ENCODE measurements at regions of chr12 and their contacts with region 1.

Region 1: DNA sequence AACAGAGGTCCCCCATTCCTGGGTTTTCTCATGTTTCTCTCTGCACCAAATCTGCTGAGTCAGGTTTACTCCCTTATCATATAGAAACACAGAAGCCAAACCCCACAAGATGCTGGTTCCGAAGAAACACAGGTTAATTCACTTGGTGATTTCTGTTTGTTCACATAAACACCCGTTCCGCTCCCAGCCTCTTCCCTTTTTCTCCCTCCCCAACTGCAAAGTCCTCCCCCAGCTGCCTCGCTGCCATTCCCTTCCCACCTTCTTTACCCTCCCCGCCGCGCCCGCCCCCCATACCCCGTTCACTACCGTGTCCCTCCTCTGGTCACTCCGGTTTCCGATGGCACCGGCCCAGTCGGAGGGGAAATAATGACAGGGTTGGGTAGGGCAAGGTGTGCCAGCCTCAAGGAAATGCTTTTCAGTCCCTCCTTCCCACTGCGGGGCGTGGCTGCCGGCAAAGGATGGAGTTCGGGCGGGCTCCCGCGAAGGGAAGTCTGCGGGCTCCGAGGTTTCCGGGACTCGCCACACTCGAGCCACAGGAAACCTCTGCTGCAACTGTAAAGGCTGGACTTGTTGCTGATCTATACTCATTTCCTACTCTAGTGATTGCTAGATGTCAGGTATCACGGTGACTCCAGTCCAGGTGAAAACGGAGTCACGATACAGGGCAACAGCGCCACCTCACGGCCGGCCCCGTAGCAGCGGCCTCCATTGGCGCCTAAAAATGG is at the start of gene STYK1:
- DNase-seq: peak; percentile 75
- H3K4me3 ChIP-seq: peak within 1 kb of the TSS; percentile 49 to 82 (median 69)
- H3K27ac ChIP-seq: peak within 1 kb of the TSS; percentile 49
- H3K4me1 ChIP-seq: peaks cover 22% of the 10 kb centered on the region
- H3K27me3 ChIP-seq: no peaks in the 10 kb centered on the region
- CTCF ChIP-seq: peak; percentile 92 to 95
- POLR2A ChIP-seq: no peak
- total RNA-seq, gene STYK1: 14.6 and 15.2 TPM in 2 replicates

Region 2: DNA sequence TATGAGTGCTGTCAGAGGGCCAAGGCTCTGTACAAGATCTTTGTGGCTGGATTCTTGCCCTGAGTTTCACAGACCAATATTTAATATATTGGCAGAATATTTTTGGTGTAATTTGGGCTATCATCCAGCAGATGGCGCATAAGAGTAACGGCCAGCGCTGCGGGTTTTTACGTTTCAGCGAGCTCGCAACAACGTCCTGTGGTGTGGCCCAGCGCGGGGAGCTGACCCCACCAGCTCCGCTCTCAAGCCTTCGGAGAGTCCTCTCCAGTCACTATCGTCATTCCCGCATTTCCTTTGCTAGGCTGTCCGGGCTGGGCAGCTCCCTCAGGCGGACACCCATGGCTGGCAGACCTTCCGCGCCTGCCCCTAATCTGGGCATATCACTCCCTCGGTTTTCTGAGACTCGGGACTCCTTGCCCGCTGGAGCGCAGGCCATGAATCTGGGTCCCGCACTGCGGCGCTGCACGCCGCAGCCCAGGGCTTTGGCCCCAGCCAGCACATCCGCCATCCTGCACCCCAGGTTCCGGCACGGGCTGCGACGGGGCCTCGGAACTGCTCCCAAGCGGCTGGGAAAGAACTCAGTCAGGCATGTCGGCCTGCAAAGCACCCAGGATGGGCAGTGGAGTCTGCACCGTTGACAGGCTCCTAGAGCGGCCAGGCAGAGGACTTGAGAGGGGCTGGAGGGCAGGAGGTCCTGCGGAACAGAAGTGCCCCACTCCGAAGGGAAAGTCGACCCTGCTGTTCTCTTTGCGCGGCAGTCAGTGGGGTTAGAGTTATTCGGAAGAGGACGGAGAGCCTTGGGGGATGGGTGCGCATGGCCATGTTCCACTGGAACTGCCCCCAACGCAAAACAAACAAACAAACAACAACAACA is 520.3 kb before region 1 on chr12:
- CTCF ChIA-PET with region 1: interaction called, 6 read pairs
- POLR2A ChIA-PET with region 1: no interaction called
- dilution Hi-C with region 1: no loop called
- intact Hi-C with region 1: loop called (anchors 2 kb)
- DNase-seq: peak; percentile 81
- H3K4me3 ChIP-seq: peak overlapping the region; percentile 44 to 67 (median 48)
- H3K27ac ChIP-seq: peak overlapping the region; percentile 58
- H3K4me1 ChIP-seq: peaks cover 5% of the 10 kb centered on the region
- H3K27me3 ChIP-seq: peaks cover 0 to 2% of the 10 kb centered on the region in 2 experiments
- CTCF ChIP-seq: peak; percentile 70 to 72
- POLR2A ChIP-seq: no peak

Region 3: GRCh38 chr12:10235761-10236631 is 437.8 kb before region 1 on chr12:
- CTCF ChIA-PET with region 1: interaction called, 3 read pairs
- POLR2A ChIA-PET with region 1: no interaction called
- dilution Hi-C with region 1: no loop called
- intact Hi-C with region 1: loop called (anchors 1 kb)
- DNase-seq: peak; percentile 55
- H3K4me3 ChIP-seq: no peak overlapping the region
- H3K27ac ChIP-seq: no peak overlapping the region
- H3K4me1 ChIP-seq: no peaks in the 10 kb centered on the region
- H3K27me3 ChIP-seq: no peaks in the 10 kb centered on the region
- CTCF ChIP-seq: peak; percentile 72 to 73
- POLR2A ChIP-seq: no peak

Region 4: GRCh38 chr12:10528174-10528953 is 145.5 kb before region 1 on chr12:
- CTCF ChIA-PET with region 1: no interaction called
- POLR2A ChIA-PET with region 1: no interaction called
- dilution Hi-C with region 1: no loop called
- intact Hi-C with region 1: no loop called
- DNase-seq: no peak
- H3K4me3 ChIP-seq: no peak overlapping the region
- H3K27ac ChIP-seq: no peak overlapping the region
- H3K4me1 ChIP-seq: no peaks in the 10 kb centered on the region
- H3K27me3 ChIP-seq: no peaks in the 10 kb centered on the region
- CTCF ChIP-seq: no peak
- POLR2A ChIP-seq: no peak

Region 5: GRCh38 chr12:10562306-10562933 is 111.4 kb before region 1 on chr12:
- CTCF ChIA-PET with region 1: interaction called, 3 read pairs
- POLR2A ChIA-PET with region 1: no interaction called
- dilution Hi-C with region 1: no loop called
- intact Hi-C with region 1: loop called (anchors 1 kb)
- DNase-seq: peak; percentile 72
- H3K4me3 ChIP-seq: no peak overlapping the region
- H3K27ac ChIP-seq: no peak overlapping the region
- H3K4me1 ChIP-seq: no peaks in the 10 kb centered on the region
- H3K27me3 ChIP-seq: no peaks in the 10 kb centered on the region
- CTCF ChIP-seq: peak; percentile 34 to 41
- POLR2A ChIP-seq: no peak

Region 6: DNA sequence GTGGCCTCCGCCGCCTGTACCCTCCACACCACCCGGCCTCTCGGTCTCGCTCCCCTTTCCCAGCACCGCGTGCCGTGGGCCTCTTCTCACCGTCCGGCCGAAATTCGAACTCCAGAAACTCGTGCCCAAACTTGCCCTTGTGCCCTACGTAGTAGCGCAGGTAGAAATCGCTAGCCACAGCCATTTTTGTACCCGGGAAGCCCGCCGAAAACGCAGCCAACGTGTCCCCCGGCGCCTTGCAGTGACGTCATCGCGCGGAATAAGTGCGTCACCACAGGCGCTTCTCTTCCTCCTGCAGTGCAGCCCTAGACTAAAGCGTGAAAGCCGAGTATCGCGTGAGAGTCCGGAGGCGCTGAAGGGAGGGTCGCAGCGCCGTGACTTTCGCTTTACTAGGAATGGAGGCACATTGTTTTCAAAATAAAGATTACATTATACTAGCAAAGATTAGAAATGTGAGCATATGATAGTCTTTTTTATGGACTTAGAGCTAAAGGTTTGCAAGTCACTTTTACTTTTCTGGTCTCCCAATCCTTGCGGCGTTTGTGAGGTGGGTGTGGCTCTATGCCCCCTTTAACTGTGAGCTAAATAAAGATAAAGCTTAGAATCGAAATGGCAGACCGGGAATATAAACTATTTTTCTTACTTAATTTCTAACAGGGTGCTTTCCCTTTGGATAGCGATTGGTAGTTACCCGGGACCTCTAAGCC is 60.3 kb before region 1 on chr12 and contains the start of gene MAGOHB:
- CTCF ChIA-PET with region 1: interaction called, 4 read pairs
- POLR2A ChIA-PET with region 1: interaction called, 3 read pairs
- dilution Hi-C with region 1: no loop called
- intact Hi-C with region 1: loop called (anchors 1 kb)
- DNase-seq: peak; percentile 95
- H3K4me3 ChIP-seq: peak within 1 kb of the TSS; percentile 58 to 96 (median 93)
- H3K27ac ChIP-seq: peak within 1 kb of the TSS; percentile 90
- H3K4me1 ChIP-seq: peaks cover 18% of the 10 kb centered on the region
- H3K27me3 ChIP-seq: no peaks in the 10 kb centered on the region
- CTCF ChIP-seq: no peak
- POLR2A ChIP-seq: peak; percentile 70
- total RNA-seq, gene MAGOHB: 45.4 and 48.3 TPM in 2 replicates

Region 7: DNA sequence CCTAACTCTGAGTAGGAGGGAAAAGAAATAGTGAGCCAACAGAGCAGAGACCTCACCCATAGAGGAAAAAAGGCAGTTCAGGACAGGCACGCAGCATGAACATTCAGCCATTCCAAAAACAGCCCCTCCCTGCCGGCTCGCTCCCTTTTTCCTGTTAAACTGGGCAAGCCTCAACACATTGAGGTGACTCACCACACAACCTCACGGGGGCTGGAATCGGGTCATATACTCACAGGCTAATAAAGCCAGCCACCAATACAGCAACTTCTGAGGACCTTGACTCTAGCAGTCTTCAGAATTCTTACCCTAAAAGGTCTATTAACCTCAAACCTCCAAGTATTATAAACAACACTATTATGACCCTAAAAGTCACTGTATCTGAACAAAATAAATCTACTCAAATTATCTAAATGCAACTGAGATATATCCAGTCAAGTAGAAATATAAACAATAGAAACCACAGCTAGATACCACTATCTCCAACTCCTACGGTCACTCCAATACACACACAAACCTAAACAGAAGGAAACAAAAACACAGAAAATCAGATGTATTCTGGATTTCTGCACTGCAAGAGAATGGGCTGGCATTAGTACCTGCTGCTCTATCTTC is 43.0 kb after region 1 on chr12:
- CTCF ChIA-PET with region 1: no interaction called
- POLR2A ChIA-PET with region 1: no interaction called
- dilution Hi-C with region 1: no loop called
- intact Hi-C with region 1: loop called (anchors 2 kb)
- DNase-seq: peak; percentile 95
- H3K4me3 ChIP-seq: peak overlapping the region in 2 of 3 experiments; percentile 6 to 44
- H3K27ac ChIP-seq: peak overlapping the region; percentile 82
- H3K4me1 ChIP-seq: peaks cover 63% of the 10 kb centered on the region
- H3K27me3 ChIP-seq: no peaks in the 10 kb centered on the region
- CTCF ChIP-seq: no peak
- POLR2A ChIP-seq: peak; percentile 49